GM18951 (cell line): ENCODE measurements at regions of chr6 and their contacts with region 1.

Region 1: GRCh38 chr6:106560996-106561685 is 68.2 kb downstream of the RTN4IP1 start:
- POLR2A ChIP-seq: no peak

Region 2: GRCh38 chr6:106339334-106340029 is 221.7 kb before region 1 on chr6:
- in situ Hi-C with region 1: loop called (anchors 10 kb)
- POLR2A ChIP-seq: no peak